Activated CD8-positive, alpha-beta T cell treated with anti-CD3 and anti-CD28 coated beads, Interleukin-2, amount 10 ng/mL, durations not matched to agents 7 days and 5 days (primary cell): ENCODE measurements at regions of chr19 and their contacts with region 1.

Region 1: GRCh38 chr19:12092065-12092867 is 27.7 kb downstream of the ZNF844 start:
- DNase-seq: peak; percentile 84
- ATAC-seq: peak; percentile 94
- H3K4me3 Mint-ChIP-seq: peak overlapping the region; percentile 84
- H3K27ac Mint-ChIP-seq: peak overlapping the region; percentile 88
- H3K4me1 Mint-ChIP-seq: peaks cover 17% of the 10 kb centered on the region
- H3K27me3 Mint-ChIP-seq: no peaks in the 10 kb centered on the region

Region 2: DNA sequence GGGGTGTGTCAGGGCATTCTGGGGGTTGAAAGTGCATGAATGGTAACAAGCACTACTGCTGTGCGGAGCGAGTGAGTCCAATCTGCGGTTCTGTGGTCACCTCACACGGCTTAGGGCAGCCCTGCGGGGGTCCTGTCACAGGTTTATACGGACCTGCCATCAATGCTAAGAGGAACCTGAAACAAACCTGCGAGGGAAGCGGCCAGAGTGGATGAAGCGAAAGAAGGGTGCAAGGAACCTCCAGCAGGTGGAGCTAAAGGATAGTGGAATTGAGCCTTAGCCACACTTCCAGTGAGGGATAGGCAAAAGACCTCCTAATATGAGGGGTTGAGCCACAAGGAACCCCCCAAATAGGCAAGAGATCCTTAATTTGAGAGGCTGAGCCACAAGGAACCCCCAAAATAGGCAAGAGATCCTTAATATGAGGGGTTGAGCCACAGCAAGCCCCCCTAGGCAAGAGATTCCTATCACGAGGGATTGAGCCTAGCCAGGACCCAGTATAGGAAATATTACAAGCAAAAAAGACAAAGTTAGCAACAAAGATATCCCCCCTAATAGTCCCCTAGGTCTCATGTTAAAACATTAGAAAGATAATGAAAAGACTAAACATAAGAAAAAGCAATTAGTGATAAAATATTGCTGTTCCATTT is 211.0 kb before region 1 on chr19:
- CTCF ChIA-PET with region 1: interaction called, 12 read pairs
- POLR2A ChIA-PET with region 1: no interaction called
- DNase-seq: peak; percentile 77
- ATAC-seq: peak; percentile 82
- H3K4me3 Mint-ChIP-seq: no peak overlapping the region
- H3K27ac Mint-ChIP-seq: no peak overlapping the region
- H3K4me1 Mint-ChIP-seq: no peaks in the 10 kb centered on the region
- H3K27me3 Mint-ChIP-seq: peaks cover 6% of the 10 kb centered on the region

Region 3: DNA sequence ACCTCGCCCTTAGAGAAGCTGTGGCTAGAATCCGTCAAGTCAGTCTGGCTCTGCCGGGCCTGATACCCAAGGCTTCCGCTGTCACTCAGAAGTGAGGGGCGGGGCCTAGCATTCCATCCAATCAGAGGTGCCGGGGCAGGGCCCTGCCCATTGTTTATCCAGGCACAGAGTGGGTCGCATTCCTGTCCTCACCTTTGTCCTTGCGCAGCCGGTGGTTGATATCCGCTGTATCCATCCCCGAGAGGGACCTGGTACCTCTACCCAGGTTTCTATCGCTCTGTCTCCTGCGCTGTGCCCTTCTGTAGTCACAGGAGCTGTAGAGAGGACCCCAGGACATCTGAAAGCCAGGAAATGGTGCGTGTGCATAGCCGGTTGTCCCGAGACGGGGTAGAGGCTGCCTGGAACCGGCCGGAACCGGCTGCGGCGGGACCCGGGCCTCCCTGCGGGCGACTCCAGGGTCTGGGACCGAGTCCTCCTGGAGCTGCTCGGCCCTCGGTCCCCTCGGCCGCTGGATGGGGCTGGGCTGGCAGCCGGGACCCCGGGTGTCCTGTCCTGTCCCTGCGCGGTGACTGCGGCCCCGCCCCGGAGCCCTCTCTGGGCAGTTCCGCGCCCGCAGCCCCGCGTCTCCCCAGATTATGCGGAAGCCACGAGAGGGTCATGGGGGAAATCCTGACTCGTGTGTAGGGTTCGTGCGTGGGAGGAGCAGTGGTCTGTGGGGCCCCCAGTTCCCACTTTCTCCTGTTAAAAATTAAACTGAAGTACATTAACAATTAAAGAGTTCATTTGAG is 127.2 kb before region 1 on chr19 and contains the start of gene ZNF763:
- CTCF ChIA-PET with region 1: interaction called, 16 read pairs
- POLR2A ChIA-PET with region 1: no interaction called
- DNase-seq: peak; percentile 94
- ATAC-seq: peak; percentile 97
- H3K4me3 Mint-ChIP-seq: peak within 1 kb of the TSS; percentile 88
- H3K27ac Mint-ChIP-seq: peak within 1 kb of the TSS; percentile 88
- H3K4me1 Mint-ChIP-seq: peaks cover 27% of the 10 kb centered on the region
- H3K27me3 Mint-ChIP-seq: no peaks in the 10 kb centered on the region
- total RNA-seq, gene ZNF763: 2.0 to 2.3 TPM

Region 4: GRCh38 chr19:11987405-11988281 is 104.6 kb before region 1 on chr19:
- CTCF ChIA-PET with region 1: interaction called, 10 read pairs
- POLR2A ChIA-PET with region 1: no interaction called
- DNase-seq: peak; percentile 97
- ATAC-seq: peak; percentile 96
- H3K4me3 Mint-ChIP-seq: peak overlapping the region; percentile 99
- H3K27ac Mint-ChIP-seq: peak overlapping the region; percentile 98
- H3K4me1 Mint-ChIP-seq: peaks cover 27% of the 10 kb centered on the region
- H3K27me3 Mint-ChIP-seq: no peaks in the 10 kb centered on the region

Region 5: DNA sequence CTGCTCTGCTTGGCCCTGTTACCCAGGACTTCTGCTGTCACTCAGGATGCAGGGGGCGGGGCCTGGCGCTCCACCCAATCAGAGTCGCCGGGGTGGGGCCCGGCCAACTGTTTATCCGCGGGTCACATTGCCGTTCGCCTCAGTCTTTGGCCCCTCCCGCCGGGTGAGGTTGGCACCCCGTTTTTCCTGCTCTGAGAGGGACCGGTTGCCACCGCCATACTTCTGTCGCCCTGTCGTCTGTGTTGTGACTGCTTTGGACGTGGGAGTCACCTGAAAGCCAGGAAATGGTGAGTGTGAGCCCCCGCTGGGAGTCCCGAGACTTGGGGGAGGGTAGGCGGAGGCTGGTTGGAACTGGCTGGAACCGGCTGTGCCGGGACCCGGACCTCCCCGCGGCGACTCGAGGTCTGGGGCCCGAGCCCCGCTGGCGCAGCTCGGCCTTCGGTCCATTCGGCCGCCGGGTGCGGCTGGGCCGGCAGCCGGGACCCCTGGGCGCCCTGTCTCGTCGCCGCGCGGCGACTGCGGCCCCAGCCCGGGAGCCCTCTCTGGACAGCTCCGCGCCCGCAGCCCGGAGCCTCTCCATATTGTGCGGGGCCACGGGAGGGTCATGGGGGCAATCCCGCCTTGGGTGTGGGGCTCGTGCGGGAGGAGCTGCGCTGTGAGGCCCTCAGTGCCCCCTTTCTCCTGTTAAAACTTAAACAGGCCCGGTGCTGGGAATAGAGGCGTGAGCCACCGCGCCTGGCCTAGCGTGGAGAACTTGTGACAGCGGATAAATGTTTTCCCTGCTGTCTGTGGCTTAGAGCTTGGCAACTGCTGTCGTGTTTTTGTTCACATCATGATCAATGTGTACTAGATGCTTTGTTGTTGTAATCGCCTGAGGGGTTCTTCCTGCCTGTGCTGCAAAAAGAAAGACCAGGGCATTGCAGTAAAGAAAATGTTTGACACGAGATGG is 27.4 kb before region 1 on chr19 and contains the start of gene ZNF844:
- CTCF ChIA-PET with region 1: interaction called, 26 read pairs
- POLR2A ChIA-PET with region 1: no interaction called
- DNase-seq: peak; percentile 78
- ATAC-seq: peak; percentile 79
- H3K4me3 Mint-ChIP-seq: peak within 1 kb of the TSS; percentile 79
- H3K27ac Mint-ChIP-seq: peak within 1 kb of the TSS; percentile 82
- H3K4me1 Mint-ChIP-seq: peaks cover 3% of the 10 kb centered on the region
- H3K27me3 Mint-ChIP-seq: no peaks in the 10 kb centered on the region
- total RNA-seq, gene ZNF844: 1.7 to 2.4 TPM

Region 6: DNA sequence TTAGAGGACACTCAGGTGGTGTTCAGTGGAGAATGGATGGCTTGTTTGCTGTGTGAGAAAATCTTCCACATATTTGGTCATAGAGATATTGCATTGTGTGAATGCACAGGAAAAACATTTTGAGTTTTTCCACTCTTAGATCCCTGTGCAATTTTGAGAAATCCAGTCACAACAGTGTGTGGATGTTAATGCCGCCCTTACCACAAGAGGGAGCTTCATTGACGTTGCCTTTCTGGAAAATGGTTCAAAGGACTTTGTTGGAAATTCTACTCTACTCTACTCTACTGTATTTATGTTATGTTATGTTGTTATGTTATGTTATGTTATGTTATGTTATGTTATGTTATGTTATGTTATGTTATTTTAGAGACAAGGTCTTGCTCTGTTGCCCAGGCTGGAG is 34.4 kb after region 1 on chr19:
- CTCF ChIA-PET with region 1: interaction called, 11 read pairs
- POLR2A ChIA-PET with region 1: no interaction called
- DNase-seq: no peak
- ATAC-seq: no peak
- H3K4me3 Mint-ChIP-seq: no peak overlapping the region
- H3K27ac Mint-ChIP-seq: no peak overlapping the region
- H3K4me1 Mint-ChIP-seq: peaks cover 3% of the 10 kb centered on the region
- H3K27me3 Mint-ChIP-seq: no peaks in the 10 kb centered on the region

Region 7: GRCh38 chr19:12139885-12140547 is 47.8 kb after region 1 on chr19 and contains the start of gene ZNF20:
- CTCF ChIA-PET with region 1: interaction called, 39 read pairs
- POLR2A ChIA-PET with region 1: interaction called, 6 read pairs
- DNase-seq: peak; percentile 95
- ATAC-seq: peak; percentile 97
- H3K4me3 Mint-ChIP-seq: peak within 1 kb of the TSS; percentile 94
- H3K27ac Mint-ChIP-seq: peak within 1 kb of the TSS; percentile 87
- H3K4me1 Mint-ChIP-seq: peaks cover 35% of the 10 kb centered on the region
- H3K27me3 Mint-ChIP-seq: no peaks in the 10 kb centered on the region
- total RNA-seq, gene ZNF20: 3.2 to 4.1 TPM